ENCODE measurements at regions of chr2 and their contacts with region 1.

Region 1: GRCh38 chr2:132891498-132891897 is 221.5 kb upstream of the LYPD1 start:
- DNase-seq: no peak
- ATAC-seq: no peak
- H3K4me3 ChIP-seq: no peak overlapping the region
- H3K27ac ChIP-seq: no peak overlapping the region
- H3K4me1 ChIP-seq: no peaks in the 10 kb centered on the region
- H3K27me3 ChIP-seq: no peaks in the 10 kb centered on the region
- CTCF ChIP-seq: no peak
- POLR2A ChIP-seq: no peak

Region 2: GRCh38 chr2:132863961-132864360 is 27.5 kb before region 1 on chr2:
- intact Hi-C with region 1: loop called in 1 of 10 experiments (anchors 2 kb)
- DNase-seq: no peak
- ATAC-seq: no peak
- H3K4me3 ChIP-seq: no peak overlapping the region
- H3K27ac ChIP-seq: no peak overlapping the region
- H3K4me1 ChIP-seq: no peaks in the 10 kb centered on the region
- H3K27me3 ChIP-seq: no peaks in the 10 kb centered on the region
- CTCF ChIP-seq: no peak
- POLR2A ChIP-seq: no peak

Measured in heart left ventricle (tissue), 16 donors.